GM10248 (cell line): ENCODE measurements at regions of chr11 and their contacts with region 1.

Region 1: GRCh38 chr11:75248690-75249268 is 8.2 kb downstream of the TPBGL start:
- DNase-seq: peak; percentile 90
- CTCF ChIP-seq: peak; percentile 100

Region 2: GRCh38 chr11:74806267-74806666 is 442.5 kb before region 1 on chr11:
- CTCF ChIA-PET with region 1: no interaction called
- POLR2A ChIA-PET with region 1: no interaction called
- DNase-seq: no peak
- CTCF ChIP-seq: no peak

Region 3: DNA sequence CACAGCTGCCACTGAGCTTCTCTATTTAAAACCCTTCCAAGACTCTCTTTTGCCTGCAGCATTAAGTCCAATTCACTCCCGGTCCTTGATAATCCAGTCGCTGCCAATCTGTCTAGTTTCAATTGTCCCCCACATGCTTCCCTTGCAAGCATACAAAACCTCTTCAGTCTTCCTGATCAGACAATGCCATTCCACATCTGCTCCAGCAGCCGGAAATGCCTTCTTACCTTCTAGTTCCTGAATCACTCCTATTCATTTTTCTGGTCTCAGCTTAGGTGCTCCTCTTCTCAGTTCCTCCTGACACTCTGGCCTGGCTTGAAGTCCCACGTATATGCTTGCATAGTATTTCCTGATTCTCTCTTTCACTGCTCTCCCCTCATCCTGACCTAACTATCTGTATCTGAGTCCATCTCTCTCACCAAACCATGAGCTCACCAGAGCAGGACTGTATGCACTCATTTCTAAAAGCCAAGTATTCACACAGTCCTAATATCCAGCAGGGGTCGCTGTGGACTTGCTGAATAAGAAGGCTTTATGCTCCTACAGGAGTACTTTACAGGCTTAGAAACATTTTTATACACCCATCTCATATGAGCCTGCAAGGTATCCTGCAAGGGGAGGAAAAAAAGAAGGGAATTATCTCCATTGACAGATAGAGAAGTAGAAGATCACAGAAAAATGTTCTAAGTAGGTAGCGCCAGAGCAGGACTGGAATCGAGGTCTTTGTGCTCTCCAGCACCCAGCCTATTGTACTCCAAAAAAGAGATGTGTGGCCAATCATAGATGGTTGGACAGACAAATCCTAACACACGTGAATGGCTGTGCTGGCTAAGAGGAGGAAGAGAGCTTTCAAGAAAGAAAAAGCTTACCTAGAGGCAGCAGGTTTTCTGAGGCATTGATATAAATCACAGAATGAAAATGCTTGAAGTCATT is 319.1 kb before region 1 on chr11:
- CTCF ChIA-PET with region 1: interaction called, 34 read pairs
- POLR2A ChIA-PET with region 1: no interaction called
- DNase-seq: peak; percentile 54
- CTCF ChIP-seq: peak; percentile 90

Region 4: GRCh38 chr11:75022759-75023396 is 225.9 kb before region 1 on chr11:
- CTCF ChIA-PET with region 1: interaction called, 54 read pairs
- POLR2A ChIA-PET with region 1: no interaction called
- DNase-seq: peak; percentile 83
- CTCF ChIP-seq: peak; percentile 97

Region 5: GRCh38 chr11:75204685-75205563 is 43.9 kb before region 1 on chr11:
- CTCF ChIA-PET with region 1: interaction called, 30 read pairs
- POLR2A ChIA-PET with region 1: no interaction called
- DNase-seq: peak; percentile 88
- CTCF ChIP-seq: peak; percentile 92

Region 6: GRCh38 chr11:75263944-75264349 is 15.2 kb after region 1 on chr11:
- CTCF ChIA-PET with region 1: interaction called, 18 read pairs
- POLR2A ChIA-PET with region 1: no interaction called
- DNase-seq: no peak
- CTCF ChIP-seq: no peak

Region 7: GRCh38 chr11:75280227-75280701 is 31.5 kb after region 1 on chr11:
- CTCF ChIA-PET with region 1: interaction called, 18 read pairs
- POLR2A ChIA-PET with region 1: no interaction called
- DNase-seq: peak; percentile 86
- CTCF ChIP-seq: peak; percentile 94

Region 8: DNA sequence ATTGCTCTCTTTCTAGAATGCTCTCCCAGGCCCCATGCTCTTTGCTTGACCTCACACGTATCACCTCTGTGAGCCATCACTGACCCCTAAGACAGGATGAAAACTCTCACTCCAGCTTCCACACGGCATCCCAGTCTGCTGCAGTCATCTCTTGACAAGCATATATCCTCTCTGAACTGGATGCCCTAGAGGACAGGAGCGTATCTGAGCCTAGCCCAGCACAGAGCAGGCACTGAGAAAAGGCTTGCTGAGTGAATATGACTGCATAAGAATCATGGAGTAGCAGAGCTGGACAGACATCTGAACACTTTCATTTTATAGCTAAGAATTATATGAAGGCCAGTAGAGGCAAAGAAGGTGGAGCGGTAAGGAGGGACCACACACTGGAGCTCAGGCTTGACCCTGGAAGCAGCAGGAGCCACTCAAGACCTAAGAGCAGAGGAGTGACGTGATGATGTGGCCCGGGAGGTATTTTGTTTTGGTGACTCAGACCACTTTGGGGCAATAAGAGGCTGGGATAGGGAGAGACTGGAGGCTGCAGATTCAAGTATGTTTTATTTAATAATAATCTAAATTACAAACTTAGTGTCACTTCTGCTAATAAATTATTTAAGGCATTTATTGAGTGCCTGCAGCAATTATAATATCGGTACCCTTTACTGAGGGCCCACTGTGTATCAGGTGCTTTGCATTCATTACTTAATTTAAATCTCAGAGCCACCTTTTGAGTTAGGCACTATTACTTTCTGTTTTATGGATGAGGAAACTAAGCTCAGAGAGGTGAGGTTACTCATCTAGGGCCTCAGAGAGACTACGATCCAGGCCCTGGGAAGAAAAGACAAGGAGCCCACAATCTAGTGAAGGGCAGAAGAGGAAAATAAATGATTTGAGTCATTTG is 377.5 kb after region 1 on chr11:
- CTCF ChIA-PET with region 1: no interaction called
- POLR2A ChIA-PET with region 1: no interaction called
- DNase-seq: no peak
- CTCF ChIP-seq: no peak